ENCODE measurements at regions of chr4 and their contacts with region 1.

Region 1: DNA sequence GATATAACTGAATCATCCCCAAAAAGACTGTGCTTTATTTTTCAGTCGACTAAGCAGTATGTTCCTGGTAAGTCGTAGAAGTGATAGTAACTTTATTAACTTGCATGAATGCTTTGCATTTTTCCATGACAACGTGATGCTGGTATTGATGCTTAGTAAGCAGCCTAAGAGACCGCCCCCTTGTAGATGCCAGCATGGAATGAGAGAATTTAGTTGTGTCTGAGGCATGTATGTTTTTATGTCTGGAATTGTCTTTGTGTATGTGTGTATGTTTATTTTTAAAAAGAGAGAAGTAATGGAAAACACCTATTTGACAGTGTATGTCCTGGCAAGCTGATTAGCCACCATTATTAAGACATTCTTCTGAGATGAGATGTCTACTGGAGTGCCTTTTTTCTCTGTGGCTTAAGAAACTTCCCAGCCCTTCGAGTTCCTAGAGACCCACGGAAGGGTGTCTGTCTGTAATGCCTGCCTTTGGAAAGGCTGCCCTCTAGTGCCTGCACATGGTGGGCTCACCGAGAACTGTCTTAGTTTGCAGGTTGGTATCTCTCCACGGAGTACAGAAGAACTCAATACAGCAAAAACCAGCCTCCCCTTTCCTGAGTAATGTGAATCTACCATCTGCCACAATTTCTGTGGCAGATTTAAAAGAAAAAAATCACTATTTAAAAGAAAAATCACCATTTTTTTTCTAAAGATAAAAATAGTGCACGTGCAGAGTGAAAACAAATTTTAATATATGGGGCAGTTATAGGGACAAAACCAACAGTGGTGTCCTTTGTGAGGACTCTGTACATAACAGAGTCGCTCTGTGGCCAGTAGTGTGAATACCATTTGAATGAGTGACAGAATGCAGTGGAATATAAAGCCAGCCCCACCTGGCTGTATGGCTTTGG is 85.9 kb downstream of the AASDH start:
- DNase-seq: peak; percentile 49
- H3K4me3 Mint-ChIP-seq: peak overlapping the region; percentile 38
- H3K27ac Mint-ChIP-seq: no peak overlapping the region
- H3K4me1 Mint-ChIP-seq: peaks cover 11% of the 10 kb centered on the region
- H3K27me3 Mint-ChIP-seq: peaks cover 2% of the 10 kb centered on the region

Region 2: DNA sequence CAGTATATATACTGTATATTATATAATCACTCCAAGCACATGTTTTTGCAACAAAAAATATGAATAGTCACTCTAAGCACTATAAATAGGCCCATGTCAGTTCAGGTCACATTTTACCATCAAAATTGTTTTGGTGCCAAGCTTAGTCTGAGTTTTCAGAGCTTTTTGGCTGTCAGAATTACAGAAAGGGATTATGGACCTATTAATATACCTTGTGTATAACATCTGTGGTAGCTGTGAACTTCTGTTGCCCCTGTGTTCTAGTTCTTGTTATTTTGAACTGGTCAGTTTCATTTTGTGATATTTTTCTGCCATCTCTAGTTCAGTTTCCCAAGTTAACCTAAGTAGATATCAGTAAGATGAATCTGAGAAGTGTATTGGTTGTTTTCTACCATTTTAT is 425.0 kb before region 1 on chr4:
- intact Hi-C with region 1: no loop called
- DNase-seq: no peak
- H3K4me3 Mint-ChIP-seq: no peak overlapping the region
- H3K27ac Mint-ChIP-seq: no peak overlapping the region
- H3K4me1 Mint-ChIP-seq: no peaks in the 10 kb centered on the region
- H3K27me3 Mint-ChIP-seq: no peaks in the 10 kb centered on the region

Region 3: DNA sequence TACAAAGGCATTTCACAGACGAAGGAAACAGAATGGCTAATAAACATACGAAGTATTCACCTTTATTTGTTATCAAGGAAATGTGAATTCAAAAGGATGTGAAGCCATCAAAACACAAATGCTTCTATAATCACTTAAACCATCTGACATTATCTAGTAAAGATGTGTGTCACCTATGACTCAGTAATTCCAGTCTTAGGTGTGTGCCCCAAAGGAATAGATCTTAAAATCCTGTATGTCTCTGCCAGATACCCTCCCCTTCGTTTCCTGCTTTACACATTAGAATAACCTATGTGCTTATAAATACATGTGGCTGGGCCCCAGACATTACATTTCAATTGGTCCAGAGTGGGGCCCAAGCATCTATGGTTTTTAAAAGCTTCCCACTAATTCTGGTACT is 394.4 kb before region 1 on chr4:
- intact Hi-C with region 1: loop called (anchors 5 kb)
- DNase-seq: no peak
- H3K4me3 Mint-ChIP-seq: no peak overlapping the region
- H3K27ac Mint-ChIP-seq: peak overlapping the region; percentile 21
- H3K4me1 Mint-ChIP-seq: peaks cover 15% of the 10 kb centered on the region
- H3K27me3 Mint-ChIP-seq: no peaks in the 10 kb centered on the region

Region 4: DNA sequence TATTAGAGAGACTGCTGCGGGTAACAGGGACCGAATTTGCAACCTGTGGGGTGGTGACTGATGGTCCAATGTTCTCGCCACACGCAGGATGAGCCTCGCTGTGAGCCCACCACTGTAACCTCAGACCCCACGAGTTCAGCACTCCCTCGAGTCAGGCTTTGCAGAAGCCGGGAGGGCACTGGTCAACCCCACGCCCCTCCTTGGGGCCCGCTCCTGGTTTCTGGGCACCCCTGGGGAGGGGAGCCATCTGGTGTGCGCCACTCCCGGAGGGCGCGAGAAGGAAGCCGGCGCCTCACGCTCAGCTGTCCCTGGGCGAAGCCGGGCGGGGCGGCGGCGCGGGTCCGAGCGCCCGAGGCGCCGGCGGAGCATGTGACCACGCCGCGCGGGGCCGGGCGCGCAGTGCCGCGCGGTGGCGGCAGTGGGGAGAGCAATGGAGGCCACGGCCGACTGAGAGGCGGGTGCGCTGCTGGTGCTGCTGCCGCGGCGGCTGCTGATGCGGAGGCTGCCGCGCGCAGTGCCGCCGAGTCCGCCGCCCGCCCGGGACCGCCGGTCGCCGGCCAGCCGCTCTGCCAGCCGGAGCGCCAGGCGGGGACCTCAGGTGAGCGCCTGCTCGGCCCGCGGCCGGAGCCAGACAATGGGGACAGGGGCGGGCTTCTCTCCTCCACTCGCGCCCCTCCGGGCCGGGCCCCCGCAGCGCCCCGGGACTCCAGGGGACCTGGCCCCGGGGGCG is 252.6 kb before region 1 on chr4:
- intact Hi-C with region 1: loop called (anchors 1 kb)
- DNase-seq: peak; percentile 50
- H3K4me3 Mint-ChIP-seq: peak overlapping the region; percentile 77
- H3K27ac Mint-ChIP-seq: no peak overlapping the region
- H3K4me1 Mint-ChIP-seq: peaks cover 13% of the 10 kb centered on the region
- H3K27me3 Mint-ChIP-seq: peaks cover 50% of the 10 kb centered on the region

Region 5: GRCh38 chr4:56129431-56129861 is 172.0 kb before region 1 on chr4:
- intact Hi-C with region 1: loop called (anchors 1 kb)
- DNase-seq: no peak
- H3K4me3 Mint-ChIP-seq: no peak overlapping the region
- H3K27ac Mint-ChIP-seq: no peak overlapping the region
- H3K4me1 Mint-ChIP-seq: no peaks in the 10 kb centered on the region
- H3K27me3 Mint-ChIP-seq: peaks cover 3% of the 10 kb centered on the region

Region 6: GRCh38 chr4:56183344-56183959 is 118.0 kb before region 1 on chr4:
- intact Hi-C with region 1: loop called (anchors 10 kb)
- DNase-seq: no peak
- H3K4me3 Mint-ChIP-seq: no peak overlapping the region
- H3K27ac Mint-ChIP-seq: no peak overlapping the region
- H3K4me1 Mint-ChIP-seq: peaks cover 35% of the 10 kb centered on the region
- H3K27me3 Mint-ChIP-seq: no peaks in the 10 kb centered on the region

Region 7: DNA sequence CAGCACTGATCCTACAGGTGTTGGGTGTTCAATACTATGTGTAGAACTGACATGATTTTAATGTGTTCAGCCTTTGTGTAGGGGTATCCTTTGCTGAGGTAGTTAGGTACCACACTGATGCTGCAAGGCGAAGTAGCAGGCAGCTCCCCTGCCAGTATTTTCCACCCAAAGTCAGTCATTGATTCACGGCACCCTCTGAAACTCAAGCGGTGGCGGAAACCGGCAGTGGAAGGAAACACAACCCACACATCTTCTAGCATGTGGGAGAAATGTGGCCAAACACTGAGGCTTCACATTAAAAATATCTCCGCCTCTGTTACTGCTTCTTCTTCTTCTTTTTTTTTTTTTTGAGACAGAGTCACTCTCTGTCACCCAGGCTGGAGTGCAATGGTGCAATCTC is 40.4 kb before region 1 on chr4:
- intact Hi-C with region 1: loop called (anchors 2 kb)
- DNase-seq: peak; percentile 34
- H3K4me3 Mint-ChIP-seq: peak overlapping the region; percentile 39
- H3K27ac Mint-ChIP-seq: peak overlapping the region; percentile 22
- H3K4me1 Mint-ChIP-seq: peaks cover 32% of the 10 kb centered on the region
- H3K27me3 Mint-ChIP-seq: peaks cover 19% of the 10 kb centered on the region

Region 8: DNA sequence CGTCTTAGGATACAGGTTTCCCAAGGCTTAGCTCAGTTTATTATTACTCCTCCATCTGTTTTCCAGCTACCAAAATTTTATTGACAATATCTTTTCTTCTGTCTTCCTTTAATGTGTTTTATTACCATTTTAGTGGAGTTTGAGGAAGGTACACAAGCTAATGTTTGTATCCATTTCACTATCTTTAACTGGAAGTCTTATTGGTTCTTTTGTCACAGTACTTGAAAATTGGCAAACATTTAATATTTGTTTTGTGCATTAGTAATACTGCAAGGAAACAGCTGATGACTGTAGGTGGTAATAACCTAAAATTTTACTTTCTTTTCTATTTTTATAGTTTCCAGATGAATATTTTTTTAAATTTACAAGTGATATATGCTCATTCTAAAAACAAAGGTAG is 194.8 kb after region 1 on chr4:
- intact Hi-C with region 1: no loop called
- DNase-seq: no peak
- H3K4me3 Mint-ChIP-seq: no peak overlapping the region
- H3K27ac Mint-ChIP-seq: no peak overlapping the region
- H3K4me1 Mint-ChIP-seq: no peaks in the 10 kb centered on the region
- H3K27me3 Mint-ChIP-seq: no peaks in the 10 kb centered on the region

Measured in activated T-helper 1 cell treated with anti-CD3 and anti-CD28 coated beads, Interleukin-12 subunit alpha, Interleukin-12 subunit beta, Interleukin-2, Interleukin-4 antibody, amounts not matched to agents 30 ng/mL and 10 ng/mL and 1 ng/mL, durations not matched to agents 14 hours and 24 hours and 36 hours (primary cell).